A549 (cell line): ENCODE measurements at regions of chr17 and their contacts with region 1.

Region 1: DNA sequence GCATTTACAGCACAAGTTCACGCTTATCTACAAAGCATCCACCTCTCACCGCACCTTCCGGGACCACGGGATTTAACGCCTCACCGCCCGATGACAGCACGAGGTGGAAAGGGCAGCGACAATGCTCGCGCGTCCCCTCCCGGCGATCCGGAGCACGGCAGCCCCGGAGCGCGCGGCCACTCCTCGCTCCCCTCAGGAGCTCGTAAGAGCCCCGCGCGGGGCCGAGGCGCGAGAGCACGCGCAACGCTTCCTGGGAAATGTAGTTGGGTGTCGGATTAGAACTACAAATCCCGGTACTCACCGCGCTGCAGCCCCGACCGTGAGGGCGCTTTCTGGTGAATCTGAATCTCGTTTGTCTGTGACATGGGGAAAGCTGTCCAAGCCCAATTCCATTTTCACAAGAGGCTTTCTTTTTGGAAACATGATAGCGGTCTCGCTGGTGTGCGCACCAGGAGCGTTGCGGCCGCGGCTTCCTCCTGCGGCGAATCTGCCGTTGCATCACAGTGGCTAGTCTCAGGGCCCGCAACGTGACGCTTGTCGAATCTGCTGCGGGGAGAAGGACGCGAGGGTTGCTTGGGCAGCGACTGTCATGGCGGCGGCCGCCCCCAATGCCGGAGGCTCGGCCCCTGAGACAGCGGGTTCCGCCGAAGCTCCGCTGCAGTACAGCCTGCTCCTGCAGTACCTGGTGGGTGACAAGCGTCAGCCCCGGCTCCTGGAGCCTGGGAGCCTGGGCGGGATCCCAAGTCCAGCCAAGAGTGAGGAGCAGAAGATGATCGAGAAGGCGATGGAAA is at the start of gene TIMM22:
- DNase-seq: peak; percentile 98 to 100
- ATAC-seq: peak; percentile 97 to 98
- H3K4me3 ChIP-seq: peak within 1 kb of the TSS; percentile 88
- H3K27ac ChIP-seq: peak within 1 kb of the TSS; percentile 84 to 93
- H3K4me1 ChIP-seq: peaks cover 24% of the 10 kb centered on the region
- CTCF ChIP-seq: peak; percentile 97
- EP300 ChIP-seq: no peak
- POLR2A ChIP-seq: peak; percentile 92
- RAD21 ChIP-seq: peak; percentile 95 to 97
- polyA plus RNA-seq, gene TIMM22: 14.7 and 15.8 TPM in 2 replicates

Region 2: DNA sequence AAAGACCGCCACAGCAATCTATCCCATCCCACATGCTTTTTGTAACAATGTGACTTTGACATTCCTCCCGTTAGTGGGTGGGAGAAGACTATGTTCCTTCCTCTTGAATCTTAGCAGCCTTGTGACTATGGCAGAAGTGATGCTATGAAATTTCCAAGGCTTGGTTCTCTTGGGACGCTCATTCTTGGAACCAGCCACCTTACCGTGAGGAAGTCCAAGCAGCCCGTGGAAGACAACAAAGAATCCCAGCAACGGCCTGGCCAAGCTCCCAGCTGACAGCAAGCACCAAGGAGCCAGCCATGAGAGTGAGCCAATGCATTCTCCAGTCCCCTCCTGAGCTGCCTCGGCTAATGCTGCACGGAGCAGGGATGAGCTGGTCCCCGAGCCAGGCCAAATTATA is 344.4 kb before region 1 on chr17:
- CTCF ChIA-PET with region 1: interaction called, 11 read pairs
- POLR2A ChIA-PET with region 1: no interaction called
- DNase-seq: no peak
- ATAC-seq: no peak
- H3K4me3 ChIP-seq: no peak overlapping the region
- H3K27ac ChIP-seq: no peak overlapping the region
- H3K4me1 ChIP-seq: no peaks in the 10 kb centered on the region
- CTCF ChIP-seq: no peak
- EP300 ChIP-seq: no peak
- POLR2A ChIP-seq: no peak
- RAD21 ChIP-seq: no peak

Region 3: GRCh38 chr17:752002-752619 is 244.6 kb before region 1 on chr17 and contains the start of gene GEMIN4:
- CTCF ChIA-PET with region 1: interaction called, 17 read pairs
- POLR2A ChIA-PET with region 1: no interaction called
- DNase-seq: peak; percentile 94 to 95
- ATAC-seq: peak; percentile 79 to 91
- H3K4me3 ChIP-seq: peak within 1 kb of the TSS; percentile 97
- H3K27ac ChIP-seq: peak within 1 kb of the TSS; percentile 97 to 98
- H3K4me1 ChIP-seq: peaks cover 10% of the 10 kb centered on the region
- CTCF ChIP-seq: peak; percentile 97
- EP300 ChIP-seq: no peak
- POLR2A ChIP-seq: peak; percentile 92
- RAD21 ChIP-seq: peak; percentile 32 to 64; a peak in 4 of 5 replicates
- polyA plus RNA-seq, gene GEMIN4: 36.1 and 51.8 TPM in 2 replicates

Region 4: GRCh38 chr17:794876-795275 is 201.9 kb before region 1 on chr17:
- CTCF ChIA-PET with region 1: interaction called, 58 read pairs
- POLR2A ChIA-PET with region 1: interaction called, 4 read pairs
- DNase-seq: peak; percentile 79 to 87
- ATAC-seq: peak; percentile 65 to 80
- H3K4me3 ChIP-seq: no peak overlapping the region
- H3K27ac ChIP-seq: peak overlapping the region in 1 of 2 experiments; percentile 17; a peak in 2 of 6 replicates
- H3K4me1 ChIP-seq: peaks cover 7% of the 10 kb centered on the region
- CTCF ChIP-seq: peak; percentile 92
- EP300 ChIP-seq: no peak
- POLR2A ChIP-seq: no peak
- RAD21 ChIP-seq: peak; percentile 97 to 98

Region 5: DNA sequence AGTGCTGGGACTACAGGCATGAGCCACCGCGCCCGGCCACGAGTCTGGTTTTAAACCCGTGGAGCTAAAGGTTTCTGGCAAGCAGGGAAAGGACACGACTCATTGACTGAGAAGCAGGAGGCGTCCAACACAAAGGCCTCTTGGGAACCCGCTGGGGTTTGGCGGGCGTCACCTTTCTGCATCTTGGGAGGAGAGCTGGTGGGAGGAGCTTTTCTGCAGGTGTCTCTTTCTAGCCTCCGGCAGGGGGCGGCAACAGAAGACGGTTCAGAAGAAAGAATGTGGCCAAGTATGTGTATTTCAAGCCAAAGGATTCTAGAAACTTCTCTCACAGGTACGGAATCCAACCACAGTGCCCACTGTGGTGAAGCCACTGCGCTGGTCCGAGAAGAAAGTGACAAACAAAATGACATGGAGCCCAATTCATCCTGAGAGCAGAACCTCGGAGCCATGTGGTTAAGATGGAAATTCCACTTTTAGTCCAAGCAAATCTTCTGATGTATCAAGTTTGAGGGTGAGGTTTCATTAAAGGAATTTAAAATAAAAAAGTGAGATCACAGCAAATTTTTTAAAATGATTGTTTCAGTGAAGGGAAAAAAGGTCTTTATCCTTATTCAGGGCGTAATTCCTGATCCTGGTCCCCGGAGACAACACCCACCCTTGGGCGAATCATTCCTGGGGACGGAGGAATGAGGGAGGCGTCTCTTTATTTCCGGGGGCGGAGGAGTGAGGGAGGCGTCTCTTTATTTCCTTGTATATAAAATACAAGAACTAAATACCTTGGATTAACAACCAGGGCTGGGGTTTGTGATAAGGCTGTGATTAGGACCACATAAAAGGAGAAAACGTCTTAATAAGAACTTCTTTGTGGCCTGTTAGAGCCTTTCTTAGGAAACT is 117.0 kb before region 1 on chr17:
- CTCF ChIA-PET with region 1: interaction called, 14 read pairs
- POLR2A ChIA-PET with region 1: no interaction called
- DNase-seq: peak; percentile 67 to 85
- ATAC-seq: peak; percentile 80 to 81
- H3K4me3 ChIP-seq: no peak overlapping the region
- H3K27ac ChIP-seq: no peak overlapping the region
- H3K4me1 ChIP-seq: peaks cover 25% of the 10 kb centered on the region; the same call in 2 of the 3 replicates
- CTCF ChIP-seq: peak; percentile 57
- EP300 ChIP-seq: no peak
- POLR2A ChIP-seq: no peak
- RAD21 ChIP-seq: peak; percentile 64 to 66

Region 6: GRCh38 chr17:1008008-1008815 is 11.5 kb after region 1 on chr17:
- CTCF ChIA-PET with region 1: interaction called, 23 read pairs
- POLR2A ChIA-PET with region 1: no interaction called
- DNase-seq: no peak
- ATAC-seq: no peak
- H3K4me3 ChIP-seq: no peak overlapping the region
- H3K27ac ChIP-seq: no peak overlapping the region
- H3K4me1 ChIP-seq: no peaks in the 10 kb centered on the region
- CTCF ChIP-seq: no peak
- EP300 ChIP-seq: no peak
- POLR2A ChIP-seq: no peak
- RAD21 ChIP-seq: no peak